AG04450 (cell line): ENCODE measurements at regions of chr19 and their contacts with region 1.

Region 1: GRCh38 chr19:39846176-39846677 is at the start of gene FBL:
- DNase-seq: peak; percentile 75
- H3K4me3 ChIP-seq: peak within 1 kb of the TSS; percentile 92
- H3K27ac ChIP-seq: peak within 1 kb of the TSS; percentile 77
- H3K27me3 ChIP-seq: no peaks in the 10 kb centered on the region
- CTCF ChIP-seq: no peak
- polyA plus RNA-seq, gene FBL: 256 and 329 TPM in 2 replicates

Region 2: DNA sequence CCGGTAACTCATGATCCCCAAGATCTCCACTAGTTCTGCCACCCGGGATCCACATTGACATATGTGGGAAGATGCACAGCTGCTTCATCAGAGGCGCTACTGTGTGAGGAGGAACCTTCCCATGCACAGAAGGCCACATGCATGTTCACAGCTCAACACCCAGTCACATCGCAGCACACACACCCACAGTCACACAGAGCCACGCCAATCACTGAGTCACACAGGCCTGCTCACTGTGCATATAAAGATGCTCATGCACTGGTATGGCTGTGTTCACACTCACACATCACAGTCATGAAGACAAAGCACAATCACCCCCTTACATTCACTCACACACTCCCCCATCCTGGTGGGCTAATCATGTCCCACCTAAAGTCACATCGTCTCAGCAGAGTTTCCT is 118.2 kb before region 1 on chr19:
- CTCF ChIA-PET with region 1: no interaction called
- POLR2A ChIA-PET with region 1: no interaction called
- DNase-seq: no peak
- H3K4me3 ChIP-seq: no peak overlapping the region
- H3K27ac ChIP-seq: no peak overlapping the region
- H3K27me3 ChIP-seq: no peaks in the 10 kb centered on the region
- CTCF ChIP-seq: no peak

Region 3: GRCh38 chr19:39765091-39766076 is 80.8 kb before region 1 on chr19:
- CTCF ChIA-PET with region 1: interaction called, 45 read pairs
- POLR2A ChIA-PET with region 1: no interaction called
- DNase-seq: no peak
- H3K4me3 ChIP-seq: no peak overlapping the region
- H3K27ac ChIP-seq: no peak overlapping the region
- H3K27me3 ChIP-seq: peaks cover under 1% of the 10 kb centered on the region
- CTCF ChIP-seq: peak; percentile 82

Region 4: GRCh38 chr19:39805104-39805503 is 41.1 kb before region 1 on chr19:
- CTCF ChIA-PET with region 1: interaction called, 31 read pairs
- POLR2A ChIA-PET with region 1: interaction called, 6 read pairs
- DNase-seq: no peak
- H3K4me3 ChIP-seq: no peak overlapping the region
- H3K27ac ChIP-seq: no peak overlapping the region
- H3K27me3 ChIP-seq: peaks cover 6% of the 10 kb centered on the region
- CTCF ChIP-seq: no peak

Region 5: GRCh38 chr19:39824143-39825092 is 21.8 kb before region 1 on chr19:
- CTCF ChIA-PET with region 1: interaction called, 30 read pairs
- POLR2A ChIA-PET with region 1: no interaction called
- DNase-seq: peak; percentile 72
- H3K4me3 ChIP-seq: peak overlapping the region; percentile 82
- H3K27ac ChIP-seq: peak overlapping the region; percentile 21
- H3K27me3 ChIP-seq: no peaks in the 10 kb centered on the region
- CTCF ChIP-seq: no peak

Region 6: GRCh38 chr19:39970675-39971379 is 124.6 kb after region 1 on chr19 and contains the start of gene PSMC4:
- CTCF ChIA-PET with region 1: interaction called, 72 read pairs
- POLR2A ChIA-PET with region 1: interaction called, 3 read pairs
- DNase-seq: peak; percentile 97
- H3K4me3 ChIP-seq: peak within 1 kb of the TSS; percentile 98
- H3K27ac ChIP-seq: peak within 1 kb of the TSS; percentile 91
- H3K27me3 ChIP-seq: no peaks in the 10 kb centered on the region
- CTCF ChIP-seq: peak; percentile 76
- polyA plus RNA-seq, gene PSMC4: 68.6 and 90.2 TPM in 2 replicates

Region 7: GRCh38 chr19:40982594-40983101 is 1136.4 kb after region 1 on chr19:
- CTCF ChIA-PET with region 1: no interaction called
- POLR2A ChIA-PET with region 1: no interaction called
- DNase-seq: no peak
- H3K4me3 ChIP-seq: no peak overlapping the region
- H3K27ac ChIP-seq: no peak overlapping the region
- H3K27me3 ChIP-seq: peaks cover 2% of the 10 kb centered on the region
- CTCF ChIP-seq: no peak